ENCODE measurements at regions of chr6 and their contacts with region 1.

Region 1: DNA sequence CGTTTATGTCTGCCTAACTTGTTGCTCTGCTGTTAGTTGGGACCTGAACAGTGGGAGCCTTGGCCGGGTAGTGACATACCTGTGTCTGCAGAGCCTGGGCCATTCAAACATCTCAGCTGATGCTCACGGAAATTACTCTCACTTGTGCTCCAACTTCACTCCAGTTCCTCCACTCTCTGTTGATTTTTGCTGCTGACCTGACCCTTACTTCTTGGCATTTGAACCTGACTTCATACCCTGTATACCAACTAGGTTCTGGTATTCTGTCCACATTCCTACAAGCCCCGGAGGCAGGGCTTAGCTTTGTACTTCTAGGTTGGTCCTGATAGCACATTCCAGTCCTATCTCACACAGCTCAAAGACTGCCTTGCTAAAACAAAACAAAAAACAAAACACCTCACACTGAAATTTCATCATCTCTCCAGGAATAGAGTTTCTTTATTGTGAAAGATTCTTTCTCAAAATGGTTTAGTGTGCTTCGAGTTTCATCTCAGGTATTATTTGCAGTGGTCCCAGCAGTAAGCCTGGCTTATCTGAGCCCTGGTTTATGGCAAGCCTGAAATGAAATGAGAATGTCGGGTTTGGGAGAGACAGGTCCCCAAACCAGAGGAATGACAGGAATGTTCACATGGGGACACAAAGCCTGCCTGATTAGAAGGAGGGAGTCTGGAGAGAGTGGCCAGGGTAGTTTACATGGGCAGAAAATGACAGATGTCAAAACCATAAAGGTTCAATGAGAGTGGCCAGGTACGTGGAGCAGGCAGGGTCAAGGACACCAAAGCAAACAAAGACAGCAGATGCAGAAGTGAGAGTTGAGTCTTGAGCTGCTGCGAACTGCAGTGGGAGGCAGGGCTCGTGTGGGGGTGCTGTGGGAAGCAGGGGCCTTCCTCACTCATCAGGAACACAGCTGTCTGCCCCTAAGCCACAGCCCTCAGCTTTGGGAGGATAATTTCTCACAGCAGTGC is 174.2 kb upstream of the HDAC2 start:
- DNase-seq: no peak
- H3K4me3 ChIP-seq: no peak overlapping the region
- H3K27ac ChIP-seq: no peak overlapping the region
- H3K4me1 ChIP-seq: no peaks in the 10 kb centered on the region
- H3K27me3 ChIP-seq: no peaks in the 10 kb centered on the region
- CTCF ChIP-seq: no peak

Region 2: GRCh38 chr6:114249522-114249921 is 104.4 kb after region 1 on chr6:
- CTCF ChIA-PET with region 1: no interaction called
- dilution Hi-C with region 1: loop called (anchors 5 kb)
- in situ Hi-C with region 1: no loop called
- intact Hi-C with region 1: no loop called
- DNase-seq: no peak
- H3K4me3 ChIP-seq: no peak overlapping the region
- H3K27ac ChIP-seq: no peak overlapping the region
- H3K4me1 ChIP-seq: peaks cover 14% of the 10 kb centered on the region
- H3K27me3 ChIP-seq: peaks cover 2% of the 10 kb centered on the region
- CTCF ChIP-seq: no peak

Measured in mammary epithelial cell (primary cell).